ENCODE measurements at regions of chr6 and their contacts with region 1.

Region 1: GRCh38 chr6:19857139-19857538 is 20.0 kb downstream of the ID4 start:
- DNase-seq: no peak
- ATAC-seq: no peak
- H3K4me3 ChIP-seq: no peak overlapping the region
- H3K27ac ChIP-seq: no peak overlapping the region
- H3K4me1 ChIP-seq: no peaks in the 10 kb centered on the region
- H3K27me3 ChIP-seq: no peaks in the 10 kb centered on the region

Region 2: DNA sequence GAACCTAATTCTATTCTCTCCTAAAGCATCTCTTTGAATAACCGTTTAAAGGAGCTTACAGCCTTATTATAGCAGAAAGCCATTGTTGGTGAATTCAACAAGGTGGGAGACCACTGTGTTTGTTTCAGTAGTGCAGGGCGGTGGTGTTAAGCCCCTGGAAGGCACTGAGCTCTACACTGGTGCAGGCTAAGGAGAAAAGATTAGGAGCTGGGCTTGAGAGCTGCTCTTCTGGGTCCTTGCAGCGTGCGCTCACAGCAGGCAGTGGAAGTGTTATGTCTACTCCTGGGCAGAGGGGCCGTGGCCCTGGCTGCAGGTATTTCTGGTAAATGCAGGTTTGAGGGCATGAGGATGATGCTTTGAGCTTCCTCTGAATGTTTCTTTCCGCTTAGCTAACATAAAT is 1108.8 kb before region 1 on chr6:
- intact Hi-C with region 1: loop called (anchors 5 to 10 kb)
- DNase-seq: no peak
- ATAC-seq: no peak
- H3K4me3 ChIP-seq: no peak overlapping the region
- H3K27ac ChIP-seq: no peak overlapping the region
- H3K4me1 ChIP-seq: no peaks in the 10 kb centered on the region
- H3K27me3 ChIP-seq: no peaks in the 10 kb centered on the region